Right cardiac atrium (tissue), 5 donors: ENCODE measurements at regions of chr7 and their contacts with region 1.

Region 1: GRCh38 chr7:8226501-8226900 is 35.5 kb downstream of the ICA1 start:
- DNase-seq: peak in 1 of 3 donors; percentile 36
- ATAC-seq: peak; percentile 64 to 82
- H3K4me3 ChIP-seq: no peak overlapping the region
- H3K27ac ChIP-seq: no peak overlapping the region
- H3K4me1 ChIP-seq: no peaks in the 10 kb centered on the region
- H3K27me3 ChIP-seq: no peaks in the 10 kb centered on the region

Region 2: DNA sequence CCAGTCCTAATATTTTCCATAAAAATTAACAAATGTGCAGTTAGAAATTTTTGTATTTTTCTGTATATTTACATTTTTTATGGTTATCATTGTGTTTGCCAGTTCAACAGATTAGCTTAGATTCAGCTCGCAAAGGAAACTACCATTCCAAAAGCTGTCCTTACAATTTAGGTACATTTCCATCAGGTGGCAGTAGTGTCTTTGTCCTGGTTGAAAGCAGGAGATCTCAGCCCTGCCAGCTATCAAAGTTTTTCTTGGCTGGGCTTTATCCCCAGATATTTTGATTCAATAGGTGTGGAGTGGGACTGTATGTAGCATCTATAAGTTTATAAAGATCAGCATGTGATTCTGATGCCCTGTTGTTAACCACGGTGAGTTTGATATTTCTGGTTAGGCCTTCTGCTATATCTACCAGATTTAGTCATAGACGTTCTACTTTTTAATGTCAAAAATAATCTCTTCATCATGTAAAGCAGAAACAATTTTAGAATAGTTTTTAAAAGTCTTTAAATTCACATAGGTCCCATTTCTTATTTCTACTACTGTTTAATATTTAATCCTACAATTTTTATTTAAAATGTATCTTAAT is 51.0 kb after region 1 on chr7:
- intact Hi-C with region 1: no loop called
- DNase-seq: no peak
- ATAC-seq: no peak
- H3K4me3 ChIP-seq: no peak overlapping the region
- H3K27ac ChIP-seq: no peak overlapping the region
- H3K4me1 ChIP-seq: no peaks in the 10 kb centered on the region
- H3K27me3 ChIP-seq: no peaks in the 10 kb centered on the region

Region 3: DNA sequence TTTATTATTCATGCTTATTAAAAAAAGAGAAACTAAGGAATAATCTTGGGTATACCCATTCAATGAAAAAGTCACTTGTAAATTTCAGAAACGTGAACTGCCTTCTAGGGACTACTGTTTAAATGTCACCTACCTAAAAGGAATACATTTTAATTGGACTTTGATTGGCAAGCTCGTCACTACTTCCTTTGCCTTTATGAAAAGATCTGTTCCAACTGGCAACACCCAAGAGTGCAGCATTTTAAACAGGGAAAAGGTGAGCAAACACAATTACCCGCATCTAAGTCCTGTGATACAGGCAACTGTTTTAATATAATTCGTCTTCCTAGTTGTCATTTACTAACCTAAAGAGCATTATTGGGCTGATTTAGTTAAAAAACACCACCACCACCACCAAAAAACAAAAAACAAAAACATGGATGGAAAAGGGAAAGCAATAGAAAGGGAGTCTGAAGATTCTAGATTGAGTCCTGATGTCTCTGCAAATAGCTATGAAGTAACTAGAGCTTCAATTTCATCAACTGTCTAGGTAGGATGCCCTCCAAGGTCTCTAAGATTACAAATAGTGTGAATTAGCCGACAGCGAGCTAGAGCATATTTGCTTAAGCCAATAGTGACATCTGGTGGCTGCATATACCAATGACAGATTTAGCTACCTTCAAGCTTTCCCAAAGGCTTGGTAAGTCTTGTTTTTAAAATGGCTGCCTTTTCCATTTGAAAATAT is 69.3 kb after region 1 on chr7:
- intact Hi-C with region 1: loop called in 1 of 4 experiments (anchors 10 kb)
- DNase-seq: no peak
- ATAC-seq: peak; percentile 91
- H3K4me3 ChIP-seq: no peak overlapping the region
- H3K27ac ChIP-seq: no peak overlapping the region
- H3K4me1 ChIP-seq: no peaks in the 10 kb centered on the region
- H3K27me3 ChIP-seq: no peaks in the 10 kb centered on the region

Region 4: DNA sequence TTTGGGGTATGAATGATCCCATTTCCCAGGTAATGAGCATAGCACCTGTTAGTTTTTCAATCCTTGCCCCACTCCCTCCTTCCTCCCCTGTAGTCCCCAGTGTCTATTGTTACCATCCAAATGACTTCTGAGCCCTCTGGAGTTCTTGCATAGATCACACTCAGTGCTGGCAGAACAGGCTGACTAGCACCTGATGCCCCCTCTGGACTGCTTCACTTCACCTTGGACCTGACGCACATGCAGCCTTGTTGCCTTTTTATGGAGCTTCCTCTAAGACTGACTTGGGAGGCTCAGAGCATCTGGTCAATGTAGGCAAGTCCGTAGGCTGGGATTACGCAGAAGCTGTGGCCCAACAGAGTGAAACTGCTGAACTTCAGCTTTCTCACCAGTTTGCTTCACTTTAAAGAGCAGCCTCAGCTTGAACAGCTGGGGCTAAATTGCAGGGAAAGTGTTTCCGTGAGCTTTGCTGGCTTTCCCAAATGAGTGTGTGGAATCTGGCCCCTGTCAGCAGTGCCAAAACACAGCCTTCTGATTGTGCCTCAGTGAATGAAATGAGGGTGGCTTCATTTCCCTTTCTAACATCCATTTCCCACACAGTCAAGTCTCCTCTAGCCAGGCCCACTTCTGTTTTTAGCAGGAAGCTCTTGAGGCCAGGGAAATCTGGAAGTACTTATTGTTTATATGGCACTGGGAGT is 255.4 kb after region 1 on chr7:
- intact Hi-C with region 1: no loop called
- DNase-seq: peak in 2 of 3 donors; percentile 6 to 12
- ATAC-seq: peak; percentile 45 to 58
- H3K4me3 ChIP-seq: no peak overlapping the region
- H3K27ac ChIP-seq: no peak overlapping the region
- H3K4me1 ChIP-seq: no peaks in the 10 kb centered on the region
- H3K27me3 ChIP-seq: no peaks in the 10 kb centered on the region